Activated CD4-positive, alpha-beta T cell treated with anti-CD3 and anti-CD28 coated beads for 36 hours (primary cell): ENCODE measurements at regions of chr11 and their contacts with region 1.

Region 1: GRCh38 chr11:87290304-87290922 is 252.7 kb downstream of the TMEM135 start:
- DNase-seq: no peak
- ATAC-seq: no peak
- H3K4me3 Mint-ChIP-seq: no peak overlapping the region
- H3K27ac Mint-ChIP-seq: no peak overlapping the region
- H3K4me1 Mint-ChIP-seq: no peaks in the 10 kb centered on the region
- H3K27me3 Mint-ChIP-seq: no peaks in the 10 kb centered on the region

Region 2: GRCh38 chr11:86869966-86870570 is 420.3 kb before region 1 on chr11:
- CTCF ChIA-PET with region 1: no interaction called
- POLR2A ChIA-PET with region 1: no interaction called
- intact Hi-C with region 1: loop called (anchors 2 to 5 kb)
- DNase-seq: peak; percentile 75
- ATAC-seq: peak; percentile 78
- H3K4me3 Mint-ChIP-seq: no peak overlapping the region
- H3K27ac Mint-ChIP-seq: no peak overlapping the region
- H3K4me1 Mint-ChIP-seq: no peaks in the 10 kb centered on the region
- H3K27me3 Mint-ChIP-seq: no peaks in the 10 kb centered on the region

Region 3: DNA sequence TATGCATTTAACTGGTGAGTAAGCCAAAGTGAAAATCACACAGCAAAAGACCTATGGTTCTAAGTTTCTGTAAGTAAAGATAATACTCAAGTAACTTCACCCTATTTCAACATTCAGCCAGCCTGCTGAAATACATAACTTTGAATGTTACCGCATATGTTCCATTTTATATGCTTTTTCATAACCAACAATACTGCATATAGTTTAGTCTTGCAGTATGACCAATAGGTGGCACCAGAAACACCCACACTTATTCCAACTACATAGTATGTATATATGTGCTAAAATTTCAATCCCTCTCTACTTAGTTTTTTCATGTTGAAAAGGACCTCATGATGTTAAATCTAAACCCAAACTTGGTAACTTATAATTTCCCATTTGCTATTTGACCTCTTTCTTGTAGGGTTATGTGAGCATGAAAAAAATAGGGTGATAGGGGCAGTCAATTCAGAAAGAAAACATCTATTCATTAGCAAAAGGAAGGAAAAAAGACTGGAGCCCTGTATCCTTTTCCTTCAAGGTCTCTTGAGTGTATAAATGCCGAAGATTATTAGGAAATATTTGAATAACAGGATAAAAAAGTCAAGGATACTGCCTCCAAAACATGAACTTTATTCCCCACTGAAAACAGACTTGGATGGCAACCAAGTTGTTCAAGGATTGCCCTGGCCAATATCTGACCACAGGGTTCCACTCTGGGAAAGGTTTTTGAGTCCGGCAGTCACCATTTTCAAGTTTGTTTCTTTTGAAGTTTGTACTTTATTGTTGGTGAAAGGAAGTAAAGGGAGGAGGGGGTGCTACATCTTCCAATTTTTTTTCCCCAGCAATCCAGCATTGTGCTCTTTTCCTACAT is 311.4 kb before region 1 on chr11:
- CTCF ChIA-PET with region 1: interaction called, 4 read pairs
- POLR2A ChIA-PET with region 1: no interaction called
- intact Hi-C with region 1: loop called (anchors 1 kb)
- DNase-seq: no peak
- ATAC-seq: peak; percentile 77
- H3K4me3 Mint-ChIP-seq: no peak overlapping the region
- H3K27ac Mint-ChIP-seq: no peak overlapping the region
- H3K4me1 Mint-ChIP-seq: no peaks in the 10 kb centered on the region
- H3K27me3 Mint-ChIP-seq: peaks cover 2% of the 10 kb centered on the region

Region 4: GRCh38 chr11:86990515-86990914 is 299.9 kb before region 1 on chr11:
- CTCF ChIA-PET with region 1: interaction called, 4 read pairs
- POLR2A ChIA-PET with region 1: no interaction called
- intact Hi-C with region 1: loop called (anchors 1 kb)
- DNase-seq: no peak
- ATAC-seq: no peak
- H3K4me3 Mint-ChIP-seq: no peak overlapping the region
- H3K27ac Mint-ChIP-seq: no peak overlapping the region
- H3K4me1 Mint-ChIP-seq: no peaks in the 10 kb centered on the region
- H3K27me3 Mint-ChIP-seq: peaks cover 2% of the 10 kb centered on the region

Region 5: DNA sequence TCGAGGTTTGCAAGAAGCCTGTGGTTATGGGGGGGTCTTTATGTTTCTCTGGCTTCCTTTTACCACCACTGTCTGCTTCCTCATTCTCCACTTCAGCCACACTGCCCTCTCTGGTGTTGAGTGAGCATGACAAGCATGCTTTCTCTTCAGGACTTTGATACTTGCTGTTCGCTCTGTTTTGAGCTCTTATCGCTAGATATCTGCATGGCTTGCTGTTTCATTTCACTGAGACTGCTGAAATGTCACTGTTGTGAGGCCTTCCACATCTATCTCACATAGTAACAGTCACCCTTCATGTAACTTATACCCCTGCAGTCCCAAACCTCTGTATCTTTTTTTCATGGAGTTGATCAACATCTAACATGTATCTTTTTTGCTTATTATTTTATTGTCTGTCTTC is 192.8 kb before region 1 on chr11:
- CTCF ChIA-PET with region 1: interaction called, 4 read pairs
- POLR2A ChIA-PET with region 1: no interaction called
- intact Hi-C with region 1: loop called in 1 of 2 experiments (anchors 2 kb)
- DNase-seq: peak; percentile 61
- ATAC-seq: peak; percentile 89
- H3K4me3 Mint-ChIP-seq: no peak overlapping the region
- H3K27ac Mint-ChIP-seq: no peak overlapping the region
- H3K4me1 Mint-ChIP-seq: peaks cover 8% of the 10 kb centered on the region
- H3K27me3 Mint-ChIP-seq: no peaks in the 10 kb centered on the region